MCF 10A (cell line): ENCODE measurements at regions of chr6 and their contacts with region 1.

Region 1: DNA sequence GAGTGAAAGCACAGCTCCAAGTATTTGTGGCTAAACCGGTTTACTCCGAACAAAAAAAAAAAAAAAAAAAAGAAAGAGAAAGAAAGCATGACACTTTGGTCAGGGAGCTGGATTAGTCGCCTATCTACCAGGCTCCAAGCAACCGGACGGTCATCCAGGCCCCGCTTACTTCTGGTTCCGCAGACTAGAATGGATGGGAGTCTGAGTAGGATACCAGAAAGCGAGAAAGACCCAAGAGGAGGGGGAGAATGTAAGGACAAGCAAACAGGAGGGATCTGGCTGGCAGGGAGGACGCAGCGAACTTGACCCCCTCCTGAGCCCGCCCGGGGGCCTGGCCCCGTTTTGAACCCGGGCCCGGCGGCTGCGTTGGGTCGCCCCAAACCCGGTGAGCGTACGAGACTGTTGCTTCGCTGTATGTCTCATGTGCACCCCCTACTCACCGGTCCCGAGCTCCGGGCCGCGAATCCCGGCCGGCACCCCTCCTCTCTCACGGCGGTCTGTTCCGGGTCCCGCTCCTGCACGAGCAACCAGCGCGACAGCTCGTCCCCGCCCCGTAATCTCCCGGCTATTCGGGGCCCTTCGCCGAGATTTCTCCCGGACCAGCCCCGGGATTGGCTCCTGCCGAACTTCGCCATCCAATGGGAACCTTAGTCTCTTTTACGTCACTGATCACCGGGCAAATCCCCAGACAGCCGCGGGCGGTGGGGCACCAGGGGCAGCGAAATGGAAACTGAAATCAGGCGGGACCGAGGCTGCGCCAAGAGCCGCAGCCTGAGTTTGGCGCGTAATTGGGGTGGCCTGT is at the start of gene TRIM26:
- DNase-seq: peak; percentile 98
- H3K4me3 Mint-ChIP-seq: peak within 1 kb of the TSS; percentile 90
- H3K27ac Mint-ChIP-seq: peak within 1 kb of the TSS; percentile 96
- H3K4me1 Mint-ChIP-seq: peaks cover 34% of the 10 kb centered on the region
- H3K27me3 Mint-ChIP-seq: no peaks in the 10 kb centered on the region
- CTCF ChIP-seq: no peak
- total RNA-seq, gene TRIM26: 48.6 and 60.6 TPM in 2 replicates

Region 2: DNA sequence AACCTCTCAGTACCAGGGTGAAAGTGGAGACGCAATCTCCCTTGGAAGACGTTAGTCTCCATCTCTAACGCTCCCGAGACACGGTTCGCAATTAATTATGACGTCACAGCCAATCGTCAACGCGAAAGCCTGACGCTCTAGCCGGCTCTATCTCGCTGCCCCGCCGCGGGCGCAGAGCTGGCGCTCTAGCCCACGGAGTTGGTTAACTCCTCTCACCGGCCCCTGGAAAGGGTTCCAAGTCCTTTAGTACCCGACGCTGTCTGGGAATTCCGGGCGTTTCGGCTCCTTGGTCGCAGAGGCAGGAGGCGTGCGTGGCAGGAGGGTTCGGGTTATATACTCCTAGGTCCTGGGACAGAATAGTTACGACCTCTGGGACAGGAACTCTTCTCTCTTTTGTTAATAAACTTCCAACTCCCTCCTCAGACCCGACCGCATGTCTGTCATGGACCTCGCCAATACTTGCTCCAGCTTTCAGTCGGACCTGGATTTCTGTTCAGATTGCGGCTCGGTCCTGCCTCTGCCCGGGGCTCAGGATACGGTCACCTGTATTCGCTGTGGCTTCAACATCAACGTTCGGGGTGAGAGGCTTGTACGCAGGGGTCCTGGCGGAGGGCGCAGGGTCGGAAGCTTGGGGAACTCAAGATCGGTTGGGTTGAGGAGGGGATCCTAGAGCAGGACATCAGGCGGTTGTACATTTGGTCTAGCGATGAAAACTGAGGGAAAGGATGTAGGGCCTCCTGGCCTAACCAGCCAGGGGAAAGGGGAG is 151.8 kb before region 1 on chr6 and contains the start of gene POLR1H:
- CTCF ChIA-PET with region 1: no interaction called
- POLR2A ChIA-PET with region 1: interaction called, 26 read pairs
- intact Hi-C with region 1: no loop called
- DNase-seq: peak; percentile 97
- H3K4me3 Mint-ChIP-seq: peak within 1 kb of the TSS; percentile 96
- H3K27ac Mint-ChIP-seq: peak within 1 kb of the TSS; percentile 92
- H3K4me1 Mint-ChIP-seq: peaks cover 12% of the 10 kb centered on the region
- H3K27me3 Mint-ChIP-seq: no peaks in the 10 kb centered on the region
- CTCF ChIP-seq: no peak
- total RNA-seq, gene POLR1H: 60.9 and 68.3 TPM in 2 replicates

Region 3: DNA sequence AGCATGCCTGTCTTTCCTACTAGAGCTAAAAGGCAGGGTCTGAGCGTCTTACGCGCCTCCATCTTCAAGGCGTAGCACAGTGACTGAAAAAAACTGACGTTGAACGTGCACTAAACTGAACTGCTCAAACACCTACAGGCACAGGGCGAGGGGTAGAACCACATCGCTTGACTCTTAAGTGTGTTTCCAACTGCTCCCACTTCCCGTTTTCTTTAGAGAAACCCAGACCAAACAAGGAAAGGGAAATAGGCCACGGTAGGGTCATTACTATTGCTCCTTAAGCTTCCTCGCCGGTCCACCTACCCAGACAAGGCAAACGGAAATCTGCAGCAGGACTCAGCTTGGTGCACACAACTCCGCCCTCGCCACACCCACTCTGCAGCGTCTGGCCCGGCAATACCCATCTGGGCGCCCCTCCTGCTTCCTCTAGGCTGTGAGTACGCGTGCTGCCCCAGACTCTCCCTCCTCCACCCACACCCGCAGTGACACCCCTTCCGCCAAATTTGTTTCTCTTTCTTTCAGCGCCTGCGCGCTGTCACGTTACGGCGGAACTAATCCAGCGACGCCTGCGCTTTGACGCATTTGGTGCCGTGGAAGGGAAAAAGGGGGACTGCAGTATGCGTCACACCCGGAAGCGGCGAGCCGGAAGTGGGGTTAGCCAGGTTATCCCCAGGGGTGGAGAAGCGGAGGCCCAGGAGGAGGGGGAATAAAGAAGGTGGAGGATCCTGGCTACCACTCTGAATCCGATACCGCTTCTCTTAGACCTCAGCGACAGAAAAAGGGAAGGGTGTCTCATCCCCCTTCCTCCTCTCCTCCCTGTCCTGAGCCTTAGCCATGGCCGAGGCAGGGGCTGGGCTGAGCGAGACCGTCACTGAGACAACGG is 146.2 kb before region 1 on chr6 and contains the start of gene PPP1R11:
- CTCF ChIA-PET with region 1: no interaction called
- POLR2A ChIA-PET with region 1: interaction called, 26 read pairs
- intact Hi-C with region 1: no loop called
- DNase-seq: peak; percentile 99
- H3K4me3 Mint-ChIP-seq: peak within 1 kb of the TSS; percentile 79
- H3K27ac Mint-ChIP-seq: peak within 1 kb of the TSS; percentile 99
- H3K4me1 Mint-ChIP-seq: peaks cover 42% of the 10 kb centered on the region
- H3K27me3 Mint-ChIP-seq: no peaks in the 10 kb centered on the region
- CTCF ChIP-seq: no peak
- total RNA-seq, gene PPP1R11: 60.1 and 82.2 TPM in 2 replicates

Region 4: GRCh38 chr6:30200551-30201281 is 12.3 kb before region 1 on chr6:
- CTCF ChIA-PET with region 1: interaction called, 4 read pairs
- POLR2A ChIA-PET with region 1: interaction called, 23 read pairs
- intact Hi-C with region 1: no loop called
- DNase-seq: no peak
- H3K4me3 Mint-ChIP-seq: no peak overlapping the region
- H3K27ac Mint-ChIP-seq: peak overlapping the region; percentile 66
- H3K4me1 Mint-ChIP-seq: peaks cover 11% of the 10 kb centered on the region
- H3K27me3 Mint-ChIP-seq: no peaks in the 10 kb centered on the region
- CTCF ChIP-seq: no peak

Region 5: GRCh38 chr6:30227763-30228487 is 14.9 kb after region 1 on chr6:
- CTCF ChIA-PET with region 1: interaction called, 28 read pairs
- POLR2A ChIA-PET with region 1: interaction called, 15 read pairs
- intact Hi-C with region 1: no loop called
- DNase-seq: no peak
- H3K4me3 Mint-ChIP-seq: no peak overlapping the region
- H3K27ac Mint-ChIP-seq: no peak overlapping the region
- H3K4me1 Mint-ChIP-seq: no peaks in the 10 kb centered on the region
- H3K27me3 Mint-ChIP-seq: peaks cover 6% of the 10 kb centered on the region
- CTCF ChIP-seq: no peak

Region 6: DNA sequence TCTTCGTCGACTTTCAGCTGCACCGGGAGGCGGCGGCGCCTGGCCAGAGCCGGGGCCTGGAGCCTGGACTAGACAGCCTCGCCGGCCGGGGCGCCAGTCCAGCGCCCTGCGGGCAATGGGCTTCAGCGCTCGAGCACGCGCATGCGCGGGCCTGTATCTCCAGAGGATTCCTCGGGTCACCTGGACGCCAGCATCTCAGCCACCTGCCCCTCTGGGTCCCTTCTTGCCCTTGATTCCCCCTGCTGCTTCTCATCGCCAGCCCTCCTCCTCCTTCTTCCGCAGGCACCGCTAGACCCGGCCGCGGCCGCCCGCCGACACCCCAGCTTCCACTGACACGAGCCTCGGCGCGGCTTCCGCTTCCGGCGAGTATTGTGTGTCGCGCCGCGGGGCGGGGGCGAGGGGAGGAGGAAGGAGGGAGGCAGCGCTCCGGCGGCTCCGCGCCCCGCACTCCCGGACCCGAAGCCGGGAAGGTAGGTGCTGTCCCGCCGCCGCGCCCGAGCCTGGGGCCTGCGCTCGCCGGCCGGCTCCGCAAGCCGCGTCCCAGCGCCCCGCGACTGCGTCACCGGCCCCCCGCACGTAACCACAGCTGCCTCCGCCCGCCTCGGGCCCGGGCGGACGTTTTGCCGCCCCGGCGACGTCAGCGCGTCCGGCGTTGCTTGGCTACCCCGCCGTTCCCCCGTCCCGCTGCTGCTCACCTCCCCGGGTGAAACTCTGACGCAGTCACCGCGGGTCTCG is 113.6 kb after region 1 on chr6 and contains the start of gene TRIM39:
- CTCF ChIA-PET with region 1: interaction called, 4 read pairs
- POLR2A ChIA-PET with region 1: interaction called, 59 read pairs
- intact Hi-C with region 1: loop called (anchors 2 kb)
- DNase-seq: peak; percentile 81
- H3K4me3 Mint-ChIP-seq: peak within 1 kb of the TSS; percentile 90
- H3K27ac Mint-ChIP-seq: peak within 1 kb of the TSS; percentile 98
- H3K4me1 Mint-ChIP-seq: peaks cover 30% of the 10 kb centered on the region
- H3K27me3 Mint-ChIP-seq: no peaks in the 10 kb centered on the region
- CTCF ChIP-seq: no peak
- total RNA-seq, gene TRIM39: 14.7 and 18.6 TPM in 2 replicates